ENCODE measurements at regions of chr10 and their contacts with region 1.

Region 1: DNA sequence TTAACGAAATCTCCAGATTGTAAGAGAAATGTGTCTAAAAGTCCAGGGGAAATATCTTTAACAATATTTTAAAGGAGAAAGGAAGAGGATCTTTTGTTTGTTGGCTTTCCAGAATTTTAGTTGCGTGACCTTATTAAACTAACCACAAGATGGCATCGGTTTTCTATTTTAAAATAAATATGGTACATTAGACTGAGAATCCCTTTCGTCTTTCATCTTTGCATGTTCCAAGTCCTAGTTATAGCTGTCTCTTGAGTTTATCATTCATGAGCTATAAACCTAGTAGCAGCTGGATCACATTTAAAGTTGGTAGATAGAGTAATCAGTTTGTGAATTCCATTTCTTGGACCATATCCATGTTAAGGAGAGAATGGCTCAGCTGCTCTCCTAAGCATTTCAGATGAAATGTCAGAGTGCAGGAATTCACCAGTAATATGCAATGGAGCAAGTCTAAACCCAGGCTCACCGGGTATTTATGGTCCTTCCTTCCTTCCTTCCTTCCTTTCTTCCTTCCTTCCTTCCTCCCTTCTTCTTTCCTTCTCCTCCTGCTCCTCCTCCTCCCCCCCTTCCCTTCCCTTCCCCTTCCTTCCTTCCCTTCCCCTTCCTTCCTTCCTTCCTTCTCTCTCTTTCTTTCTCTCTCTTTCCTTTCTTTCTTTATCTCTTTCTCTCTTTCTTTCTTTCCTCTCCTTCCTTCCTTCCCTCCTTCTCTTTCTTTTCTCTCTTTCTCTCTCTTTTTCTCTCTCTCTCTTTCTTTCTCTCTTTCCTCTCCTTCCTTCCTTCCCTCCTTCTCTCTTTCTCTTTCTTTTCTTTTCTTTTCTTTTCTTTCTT is 57.8 kb upstream of the RAB18 start:
- DNase-seq: no peak
- ATAC-seq: no peak
- H3K4me3 ChIP-seq: no peak overlapping the region
- H3K27ac ChIP-seq: no peak overlapping the region
- H3K4me1 ChIP-seq: no peaks in the 10 kb centered on the region
- H3K27me3 ChIP-seq: no peaks in the 10 kb centered on the region

Region 2: DNA sequence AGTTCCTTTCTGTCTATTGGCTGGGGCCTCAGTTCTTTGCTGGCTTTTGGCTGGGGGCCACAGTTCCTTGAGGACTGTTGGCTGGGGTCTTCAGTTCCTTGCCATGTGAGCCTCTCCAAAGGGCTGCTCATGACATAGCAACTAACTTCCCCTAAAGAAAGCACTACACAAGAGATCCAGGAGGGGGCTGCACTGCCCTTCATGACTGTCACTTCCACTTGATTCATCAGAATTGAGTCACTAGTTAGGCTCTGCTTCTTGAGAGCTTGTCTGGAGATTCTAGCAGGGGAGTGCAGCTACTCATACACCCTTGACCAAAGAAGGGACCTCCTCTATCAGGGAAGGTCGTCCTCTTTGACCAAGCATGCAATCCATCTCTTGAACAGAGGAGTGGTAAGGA is 337.4 kb after region 1 on chr10:
- intact Hi-C with region 1: no loop called
- DNase-seq: no peak
- ATAC-seq: peak; percentile 15
- H3K4me3 ChIP-seq: no peak overlapping the region
- H3K27ac ChIP-seq: no peak overlapping the region
- H3K4me1 ChIP-seq: peaks cover 3% of the 10 kb centered on the region in 2 donors
- H3K27me3 ChIP-seq: no peaks in the 10 kb centered on the region

Region 3: GRCh38 chr10:28393966-28394568 is 947.8 kb after region 1 on chr10:
- intact Hi-C with region 1: loop called in 1 of 2 experiments (anchors 10 kb)
- DNase-seq: peak; percentile 69 to 79
- ATAC-seq: peak; percentile 87
- H3K4me3 ChIP-seq: no peak overlapping the region
- H3K27ac ChIP-seq: no peak overlapping the region
- H3K4me1 ChIP-seq: no peaks in the 10 kb centered on the region
- H3K27me3 ChIP-seq: no peaks in the 10 kb centered on the region